Heart left ventricle (tissue), 16 donors: ENCODE measurements at regions of chr14 and their contacts with region 1.

Region 1: DNA sequence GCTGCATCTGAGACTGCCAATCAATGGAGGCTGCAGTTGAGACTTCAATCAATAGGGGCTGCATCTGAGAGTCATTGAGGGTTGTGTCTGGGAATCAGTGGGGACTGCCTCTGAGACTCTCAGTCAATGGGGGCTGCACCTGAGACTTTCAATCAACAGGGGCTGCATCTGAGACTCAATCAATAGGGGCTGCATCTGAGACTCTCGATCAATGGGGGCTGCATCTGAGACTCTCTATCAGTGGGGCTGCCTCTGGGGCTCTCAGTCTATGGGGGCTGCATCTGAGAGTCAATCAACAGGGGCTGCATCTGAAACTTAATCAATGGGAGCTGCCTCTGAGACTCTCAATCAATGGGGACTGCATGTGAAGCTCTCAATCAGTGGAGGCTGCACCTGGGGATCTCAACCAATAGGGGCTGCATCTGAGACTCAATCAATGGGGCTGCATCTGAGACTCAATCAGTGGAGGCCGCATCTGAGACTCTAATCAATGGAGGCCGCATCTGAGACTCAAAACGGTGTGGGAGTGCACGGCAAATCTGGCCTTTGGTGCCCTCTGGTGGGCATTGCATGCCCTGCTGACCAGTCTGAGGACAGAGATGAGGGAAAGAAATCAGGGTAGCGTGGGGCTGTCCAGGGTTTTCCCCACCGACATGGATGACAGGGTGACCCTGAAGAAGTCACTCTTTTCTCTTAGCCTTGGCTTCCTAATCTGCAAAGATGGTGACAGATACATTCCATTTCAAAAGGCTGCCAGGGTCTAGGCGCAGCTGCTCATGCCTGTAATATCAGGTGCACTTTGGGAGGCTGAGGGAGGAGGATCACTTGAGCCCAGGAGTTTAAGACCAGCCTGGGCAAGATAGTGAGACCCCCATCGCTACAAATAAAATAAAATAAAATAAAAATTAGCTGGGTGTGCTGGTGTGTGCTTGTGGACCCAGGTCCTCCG is 41.3 kb upstream of the EIF5 start:
- DNase-seq: peak; percentile 69 to 85 (median 76)
- ATAC-seq: peak; percentile 74 to 94 (median 90)
- H3K4me3 ChIP-seq: no peak overlapping the region
- H3K27ac ChIP-seq: no peak overlapping the region
- H3K4me1 ChIP-seq: no peaks in the 10 kb centered on the region
- H3K27me3 ChIP-seq: peaks cover 0 to 25% (median 0%) of the 10 kb centered on the region in 9 donors
- CTCF ChIP-seq: peak; percentile 85 to 98 (median 88)
- POLR2A ChIP-seq: no peak

Region 2: GRCh38 chr14:102708494-102708893 is 584.2 kb before region 1 on chr14:
- intact Hi-C with region 1: loop called in 1 of 10 experiments (anchors 10 kb)
- DNase-seq: no peak
- ATAC-seq: no peak
- H3K4me3 ChIP-seq: no peak overlapping the region
- H3K27ac ChIP-seq: no peak overlapping the region
- H3K4me1 ChIP-seq: no peaks in the 10 kb centered on the region
- H3K27me3 ChIP-seq: no peaks in the 10 kb centered on the region
- CTCF ChIP-seq: no peak
- POLR2A ChIP-seq: no peak

Region 3: DNA sequence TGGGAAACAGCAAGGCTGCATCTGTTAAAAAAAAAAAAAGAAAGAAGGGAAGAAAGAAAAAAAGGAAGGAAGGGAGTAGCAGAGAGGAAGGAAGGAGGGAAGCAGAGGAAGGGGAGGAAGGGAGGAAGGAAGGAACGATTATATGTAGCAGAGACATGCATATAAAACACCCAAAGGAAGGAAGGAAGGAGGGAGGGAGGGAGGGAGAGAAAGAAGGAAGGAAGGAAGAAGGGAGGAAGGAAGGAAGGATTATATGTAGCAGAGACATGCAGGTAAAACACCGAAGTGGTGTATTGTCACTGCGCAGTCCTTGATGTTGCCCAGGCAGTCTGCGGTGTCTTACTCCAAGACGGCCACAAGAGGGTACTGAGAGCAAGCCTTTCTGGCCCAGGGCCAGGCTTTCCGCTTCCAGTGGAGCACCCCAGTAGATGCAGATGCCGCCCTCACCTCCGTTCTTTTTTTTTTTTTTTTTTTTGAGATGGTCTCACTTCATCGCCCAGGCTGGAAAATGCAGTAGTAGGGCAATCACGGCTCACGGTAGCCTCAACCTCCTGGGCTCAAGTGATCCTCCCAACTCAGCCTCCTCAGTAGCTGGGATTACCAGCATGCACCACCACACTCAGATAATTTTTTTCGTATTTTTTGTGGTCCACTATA is 214.5 kb before region 1 on chr14:
- intact Hi-C with region 1: loop called in 9 of 10 experiments (anchors 1 to 10 kb)
- DNase-seq: peak; percentile 76 to 89 (median 77)
- ATAC-seq: peak in 3 of 4 donors; percentile 30 to 34 (median 33)
- H3K4me3 ChIP-seq: no peak overlapping the region
- H3K27ac ChIP-seq: no peak overlapping the region
- H3K4me1 ChIP-seq: peaks cover 3 to 27% (median 20%) of the 10 kb centered on the region in 12 donors
- H3K27me3 ChIP-seq: peaks cover 0 to 9% (median 0%) of the 10 kb centered on the region in 9 donors
- CTCF ChIP-seq: peak; percentile 52 to 75 (median 67)
- POLR2A ChIP-seq: no peak

Region 4: GRCh38 chr14:103085106-103086091 is 207.3 kb before region 1 on chr14:
- intact Hi-C with region 1: loop called in 1 of 10 experiments (anchors 2 kb)
- DNase-seq: peak in 3 of 5 donors; percentile 6 to 50 (median 15)
- ATAC-seq: peak in 1 of 4 donors; percentile 40
- H3K4me3 ChIP-seq: no peak overlapping the region
- H3K27ac ChIP-seq: no peak overlapping the region
- H3K4me1 ChIP-seq: peaks cover 0 to 7% (median 0%) of the 10 kb centered on the region in 12 donors
- H3K27me3 ChIP-seq: peaks cover 0 to 47% (median 19%) of the 10 kb centered on the region in 9 donors
- CTCF ChIP-seq: peak in 3 of 12 donors; percentile 10 to 17 (median 12)
- POLR2A ChIP-seq: no peak

Region 5: GRCh38 chr14:103104654-103105452 is 187.8 kb before region 1 on chr14:
- intact Hi-C with region 1: loop called (anchors 1 to 5 kb)
- DNase-seq: peak; percentile 64 to 88 (median 68)
- ATAC-seq: peak; percentile 69 to 81 (median 76)
- H3K4me3 ChIP-seq: no peak overlapping the region
- H3K27ac ChIP-seq: no peak overlapping the region
- H3K4me1 ChIP-seq: peaks cover 0 to 35% (median 24%) of the 10 kb centered on the region in 12 donors
- H3K27me3 ChIP-seq: peaks cover 17 to 54% (median 43%) of the 10 kb centered on the region in 9 donors
- CTCF ChIP-seq: peak; percentile 88 to 98 (median 94)
- POLR2A ChIP-seq: peak in 1 of 2 donors; percentile 17

Region 6: GRCh38 chr14:103121846-103122584 is 170.7 kb before region 1 on chr14:
- intact Hi-C with region 1: loop called in 1 of 10 experiments (anchors 5 kb)
- DNase-seq: peak; percentile 87 to 93 (median 89)
- ATAC-seq: peak; percentile 25 to 52 (median 44)
- H3K4me3 ChIP-seq: peak overlapping the region in 10 of 12 donors; percentile 62 to 94 (median 76)
- H3K27ac ChIP-seq: peak overlapping the region; percentile 89 to 99 (median 93)
- H3K4me1 ChIP-seq: peaks cover 3 to 87% (median 70%) of the 10 kb centered on the region in 12 donors
- H3K27me3 ChIP-seq: no peaks in the 10 kb centered on the region
- CTCF ChIP-seq: no peak
- POLR2A ChIP-seq: no peak